GM12878 (cell line): ENCODE measurements at regions of chr7 and their contacts with region 1.

Region 1: GRCh38 chr7:100407285-100408180 is 21.0 kb downstream of the ZCWPW1 start:
- DNase-seq: peak; percentile 66
- ATAC-seq: peak; percentile 98
- H3K4me3 ChIP-seq: no peak overlapping the region
- H3K27ac ChIP-seq: no peak overlapping the region
- H3K4me1 ChIP-seq: peaks cover 7% of the 10 kb centered on the region
- H3K27me3 ChIP-seq: no peaks in the 10 kb centered on the region
- CTCF ChIP-seq: peak; percentile 69 to 82 (median 71)
- EP300 ChIP-seq: no peak
- POLR2A ChIP-seq: no peak
- RAD21 ChIP-seq: peak; percentile 87

Region 2: DNA sequence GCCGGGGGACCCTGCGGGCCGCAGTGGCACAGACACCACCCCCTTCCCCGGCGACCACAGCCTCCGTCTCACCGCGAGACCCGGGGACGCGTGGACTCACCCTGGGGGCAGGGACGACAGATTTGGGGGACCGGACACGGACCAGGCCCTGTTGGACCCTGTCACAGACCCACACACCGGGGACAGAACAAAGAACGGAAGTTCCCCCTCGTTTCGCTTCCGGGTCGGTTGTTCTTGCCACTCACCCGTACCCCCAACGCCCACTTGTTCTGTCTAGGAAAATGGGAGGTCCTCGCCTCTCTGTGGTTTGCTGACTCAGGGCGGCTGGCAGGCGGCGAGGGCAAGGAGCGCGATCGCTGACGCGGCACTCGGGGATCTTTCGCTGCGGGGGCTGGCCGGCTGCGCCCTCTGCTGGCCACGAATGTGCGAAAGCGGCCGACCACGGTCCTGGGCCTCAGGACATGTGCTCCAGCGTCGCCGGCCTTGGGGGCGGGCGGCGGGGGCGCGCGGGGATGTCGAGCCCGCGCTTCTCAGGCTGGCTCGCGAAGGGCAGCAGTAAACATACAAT is 325.9 kb before region 1 on chr7 and contains the start of gene ZNF3:
- CTCF ChIA-PET with region 1: no interaction called
- POLR2A ChIA-PET with region 1: no interaction called
- RAD21 ChIA-PET with region 1: no interaction called
- SMC1A ChIA-PET with region 1: no interaction called
- in situ Hi-C with region 1: no loop called
- intact Hi-C with region 1: no loop called
- DNase-seq: peak; percentile 97
- ATAC-seq: peak; percentile 90
- H3K4me3 ChIP-seq: peak within 1 kb of the TSS; percentile 88
- H3K27ac ChIP-seq: peak within 1 kb of the TSS; percentile 89
- H3K4me1 ChIP-seq: peaks cover 4% of the 10 kb centered on the region
- H3K27me3 ChIP-seq: no peaks in the 10 kb centered on the region
- CTCF ChIP-seq: peak; percentile 84 to 97 (median 89); a peak in 5 of 6 replicates
- EP300 ChIP-seq: peak in 1 of 2 experiments; percentile 60; a peak in 1 of 4 replicates
- POLR2A ChIP-seq: peak; percentile 96
- RAD21 ChIP-seq: peak; percentile 66
- polyA plus RNA-seq, gene ZNF3: 17.2 to 19.0 TPM

Region 3: GRCh38 chr7:100342765-100343164 is 64.8 kb before region 1 on chr7:
- CTCF ChIA-PET with region 1: interaction called, 16 read pairs
- POLR2A ChIA-PET with region 1: no interaction called
- RAD21 ChIA-PET with region 1: interaction called, 15 read pairs
- SMC1A ChIA-PET with region 1: interaction called, 13 read pairs
- in situ Hi-C with region 1: no loop called
- intact Hi-C with region 1: no loop called
- DNase-seq: no peak
- ATAC-seq: no peak
- H3K4me3 ChIP-seq: no peak overlapping the region
- H3K27ac ChIP-seq: no peak overlapping the region
- H3K4me1 ChIP-seq: peaks cover 15% of the 10 kb centered on the region
- H3K27me3 ChIP-seq: no peaks in the 10 kb centered on the region
- CTCF ChIP-seq: no peak
- EP300 ChIP-seq: no peak
- POLR2A ChIP-seq: no peak
- RAD21 ChIP-seq: no peak

Region 4: GRCh38 chr7:100369105-100369504 is 38.4 kb before region 1 on chr7:
- CTCF ChIA-PET with region 1: interaction called, 134 read pairs
- POLR2A ChIA-PET with region 1: interaction called, 10 read pairs
- RAD21 ChIA-PET with region 1: interaction called, 89 read pairs
- SMC1A ChIA-PET with region 1: interaction called, 65 read pairs
- in situ Hi-C with region 1: no loop called
- intact Hi-C with region 1: loop called (anchors 2 kb)
- DNase-seq: peak; percentile 90
- ATAC-seq: peak; percentile 74
- H3K4me3 ChIP-seq: no peak overlapping the region
- H3K27ac ChIP-seq: peak overlapping the region; percentile 93
- H3K4me1 ChIP-seq: peaks cover 70% of the 10 kb centered on the region
- H3K27me3 ChIP-seq: no peaks in the 10 kb centered on the region
- CTCF ChIP-seq: no peak
- EP300 ChIP-seq: peak; percentile 81 to 87
- POLR2A ChIP-seq: peak; percentile 77
- RAD21 ChIP-seq: no peak

Region 5: GRCh38 chr7:100380196-100380595 is 27.3 kb before region 1 on chr7:
- CTCF ChIA-PET with region 1: interaction called, 134 read pairs
- POLR2A ChIA-PET with region 1: interaction called, 10 read pairs
- RAD21 ChIA-PET with region 1: interaction called, 89 read pairs
- SMC1A ChIA-PET with region 1: interaction called, 65 read pairs
- in situ Hi-C with region 1: no loop called
- intact Hi-C with region 1: loop called (anchors 2 kb)
- DNase-seq: no peak
- ATAC-seq: no peak
- H3K4me3 ChIP-seq: no peak overlapping the region; the same call in 1 of the 2 replicates
- H3K27ac ChIP-seq: no peak overlapping the region
- H3K4me1 ChIP-seq: peaks cover 8% of the 10 kb centered on the region
- H3K27me3 ChIP-seq: no peaks in the 10 kb centered on the region
- CTCF ChIP-seq: no peak
- EP300 ChIP-seq: no peak
- POLR2A ChIP-seq: no peak
- RAD21 ChIP-seq: no peak

Region 6: DNA sequence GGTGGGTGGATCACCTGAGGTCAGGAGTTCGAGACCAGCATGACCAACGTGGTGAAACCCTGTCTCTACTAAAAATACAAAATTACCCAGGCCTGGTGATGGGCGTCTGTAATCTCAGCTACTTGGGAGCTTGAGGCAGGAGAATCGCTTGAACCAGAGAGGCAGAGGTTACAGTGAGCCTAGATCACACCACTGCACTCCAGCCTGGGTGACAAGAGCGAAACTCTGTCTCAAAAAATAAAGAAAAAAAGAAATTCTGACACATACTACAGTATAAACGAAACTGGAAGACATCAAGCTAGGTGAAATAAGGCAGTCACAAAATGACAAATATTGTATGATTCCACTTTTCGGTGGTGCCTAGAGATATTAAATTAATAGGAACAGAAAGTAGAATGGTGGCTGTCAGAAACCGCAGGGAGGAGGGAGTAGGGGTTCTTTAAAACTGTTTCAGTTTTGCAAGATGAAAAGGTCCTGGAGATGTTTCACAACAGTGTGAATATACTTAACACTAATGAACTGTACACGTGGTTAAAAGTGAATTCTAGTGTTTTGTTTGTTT is 11.0 kb before region 1 on chr7:
- CTCF ChIA-PET with region 1: interaction called, 25 read pairs
- POLR2A ChIA-PET with region 1: interaction called, 10 read pairs
- RAD21 ChIA-PET with region 1: interaction called, 9 read pairs
- SMC1A ChIA-PET with region 1: interaction called, 30 read pairs
- in situ Hi-C with region 1: no loop called
- intact Hi-C with region 1: no loop called
- DNase-seq: peak; percentile 93
- ATAC-seq: peak; percentile 92
- H3K4me3 ChIP-seq: peak overlapping the region; percentile 43; the same call in 1 of the 2 replicates
- H3K27ac ChIP-seq: peak overlapping the region; percentile 72
- H3K4me1 ChIP-seq: peaks cover 33% of the 10 kb centered on the region
- H3K27me3 ChIP-seq: no peaks in the 10 kb centered on the region
- CTCF ChIP-seq: no peak
- EP300 ChIP-seq: peak; percentile 63 to 92; a peak in 2 of 4 replicates
- POLR2A ChIP-seq: no peak
- RAD21 ChIP-seq: no peak

Region 7: DNA sequence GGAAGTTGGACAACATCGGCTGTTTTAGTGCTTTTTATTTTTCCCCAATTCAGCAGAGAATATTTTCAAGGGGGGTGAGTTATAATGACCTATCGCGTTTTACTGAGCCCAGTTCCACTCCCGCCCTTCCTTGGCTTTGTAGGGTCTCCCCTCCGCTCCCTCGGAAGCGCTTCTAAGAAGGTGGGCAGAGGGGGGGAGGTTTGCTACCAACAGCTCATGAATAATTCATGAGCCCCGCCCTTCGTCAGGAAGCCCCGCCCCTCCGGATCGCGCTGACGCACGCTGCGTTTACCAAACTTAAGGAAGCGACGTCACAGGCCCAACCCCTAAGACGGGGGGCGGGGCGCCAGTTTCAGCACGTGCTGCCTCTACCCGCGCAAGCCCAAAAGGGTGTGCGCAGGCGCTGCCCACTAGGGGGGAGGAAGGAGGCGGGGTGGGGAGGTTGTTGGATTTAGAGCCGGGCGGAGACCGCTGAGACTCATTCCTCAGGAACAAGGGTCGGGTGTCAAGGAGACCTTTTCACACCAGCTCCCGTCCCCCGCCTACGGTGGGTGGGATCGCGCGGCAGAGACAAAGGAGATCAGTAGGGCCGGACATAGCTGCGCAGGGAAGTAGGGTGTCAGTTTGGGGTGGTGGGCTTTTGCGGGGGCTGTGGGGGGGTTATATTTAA is 21.6 kb after region 1 on chr7:
- CTCF ChIA-PET with region 1: interaction called, 7 read pairs
- POLR2A ChIA-PET with region 1: interaction called, 10 read pairs
- RAD21 ChIA-PET with region 1: interaction called, 16 read pairs
- SMC1A ChIA-PET with region 1: interaction called, 15 read pairs
- in situ Hi-C with region 1: no loop called
- intact Hi-C with region 1: no loop called
- DNase-seq: peak; percentile 96
- ATAC-seq: peak; percentile 68
- H3K4me3 ChIP-seq: peak overlapping the region; percentile 74
- H3K27ac ChIP-seq: peak overlapping the region; percentile 99
- H3K4me1 ChIP-seq: peaks cover 28% of the 10 kb centered on the region
- H3K27me3 ChIP-seq: no peaks in the 10 kb centered on the region
- CTCF ChIP-seq: no peak
- EP300 ChIP-seq: peak in 1 of 2 experiments; percentile 72; a peak in 2 of 4 replicates
- POLR2A ChIP-seq: peak; percentile 89
- RAD21 ChIP-seq: no peak

Region 8: GRCh38 chr7:100670074-100670473 is 262.5 kb after region 1 on chr7:
- CTCF ChIA-PET with region 1: no interaction called
- POLR2A ChIA-PET with region 1: no interaction called
- RAD21 ChIA-PET with region 1: no interaction called
- SMC1A ChIA-PET with region 1: no interaction called
- in situ Hi-C with region 1: no loop called
- intact Hi-C with region 1: no loop called
- DNase-seq: no peak
- ATAC-seq: no peak
- H3K4me3 ChIP-seq: no peak overlapping the region
- H3K27ac ChIP-seq: no peak overlapping the region
- H3K4me1 ChIP-seq: no peaks in the 10 kb centered on the region; the same call in 1 of the 2 replicates
- H3K27me3 ChIP-seq: no peaks in the 10 kb centered on the region
- CTCF ChIP-seq: no peak
- EP300 ChIP-seq: no peak
- POLR2A ChIP-seq: no peak
- RAD21 ChIP-seq: no peak

Region 9: GRCh38 chr7:100763556-100764140 is 356.1 kb after region 1 on chr7:
- CTCF ChIA-PET with region 1: no interaction called
- POLR2A ChIA-PET with region 1: no interaction called
- RAD21 ChIA-PET with region 1: no interaction called
- SMC1A ChIA-PET with region 1: no interaction called
- in situ Hi-C with region 1: no loop called
- intact Hi-C with region 1: no loop called
- DNase-seq: no peak
- ATAC-seq: no peak
- H3K4me3 ChIP-seq: no peak overlapping the region
- H3K27ac ChIP-seq: no peak overlapping the region
- H3K4me1 ChIP-seq: no peaks in the 10 kb centered on the region
- H3K27me3 ChIP-seq: peaks cover 0 to 1% of the 10 kb centered on the region in 2 experiments; a peak in 1 of 4 replicates
- CTCF ChIP-seq: no peak
- EP300 ChIP-seq: no peak
- POLR2A ChIP-seq: no peak
- RAD21 ChIP-seq: no peak